MCF 10A (cell line): ENCODE measurements at regions of chr5 and their contacts with region 1.

Region 1: DNA sequence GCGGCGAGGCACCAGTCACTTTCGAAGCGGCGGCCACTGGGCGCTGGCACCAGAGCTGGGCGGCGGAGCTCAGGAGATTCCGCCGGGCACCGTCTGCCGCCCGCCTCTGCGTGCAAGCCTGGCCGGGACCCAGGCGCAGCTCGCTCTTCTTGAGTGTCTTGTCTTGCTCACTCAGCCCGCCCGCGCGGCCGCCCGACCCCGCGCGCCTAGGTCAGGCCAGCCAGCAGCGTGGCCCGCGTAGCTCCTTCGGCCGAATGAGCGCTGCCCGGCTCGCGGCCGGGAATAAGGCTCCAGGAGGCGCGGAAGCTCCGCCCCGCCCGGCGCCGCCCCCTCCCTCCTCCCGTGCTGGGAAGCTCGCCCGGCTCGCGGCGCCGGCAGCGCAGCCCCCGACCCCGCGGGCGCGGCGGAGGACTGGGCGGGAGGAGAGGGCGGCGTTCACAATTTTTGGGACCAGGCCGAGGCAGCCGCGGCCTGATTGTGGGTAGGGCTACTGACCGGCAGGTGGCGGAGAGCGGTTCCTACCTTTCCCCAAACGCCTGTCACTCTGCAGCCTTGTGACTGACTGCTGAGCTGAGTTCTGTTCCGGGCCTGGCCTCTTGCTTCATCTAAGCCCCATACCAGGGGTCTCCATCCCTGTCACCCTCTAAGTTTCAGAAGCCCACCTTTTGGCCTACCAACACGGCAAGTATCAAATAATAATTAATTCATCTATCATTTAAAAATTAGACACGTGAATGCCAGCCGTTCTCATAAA is at the start of gene HBEGF:
- DNase-seq: peak; percentile 94
- H3K4me3 Mint-ChIP-seq: peak within 1 kb of the TSS; percentile 78
- H3K27ac Mint-ChIP-seq: peak within 1 kb of the TSS; percentile 54
- H3K4me1 Mint-ChIP-seq: peaks cover 47% of the 10 kb centered on the region
- H3K27me3 Mint-ChIP-seq: no peaks in the 10 kb centered on the region
- CTCF ChIP-seq: peak; percentile 62
- total RNA-seq, gene HBEGF: 20.6 and 55.7 TPM in 2 replicates

Region 2: DNA sequence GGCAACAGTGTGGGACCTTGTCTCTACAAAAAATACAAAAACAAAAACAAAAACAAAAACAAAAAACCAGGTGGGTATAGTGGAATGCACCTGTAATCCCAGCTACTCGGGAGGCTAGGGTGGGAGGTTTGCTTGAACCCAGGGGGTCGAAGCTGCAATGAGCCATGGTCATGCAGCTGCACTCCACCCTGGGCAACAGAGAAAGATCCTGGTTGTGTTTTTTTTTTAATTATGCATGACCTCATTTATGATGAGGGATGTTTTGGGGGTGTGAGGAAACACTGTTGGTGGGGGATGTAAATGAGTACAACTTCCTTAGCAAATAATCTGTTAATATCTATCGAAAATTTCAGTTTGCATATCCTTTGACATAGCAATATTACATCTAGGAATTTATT is 814.8 kb before region 1 on chr5:
- CTCF ChIA-PET with region 1: no interaction called
- POLR2A ChIA-PET with region 1: no interaction called
- intact Hi-C with region 1: no loop called
- DNase-seq: no peak
- H3K4me3 Mint-ChIP-seq: no peak overlapping the region
- H3K27ac Mint-ChIP-seq: no peak overlapping the region
- H3K4me1 Mint-ChIP-seq: no peaks in the 10 kb centered on the region
- H3K27me3 Mint-ChIP-seq: no peaks in the 10 kb centered on the region
- CTCF ChIP-seq: no peak

Region 3: DNA sequence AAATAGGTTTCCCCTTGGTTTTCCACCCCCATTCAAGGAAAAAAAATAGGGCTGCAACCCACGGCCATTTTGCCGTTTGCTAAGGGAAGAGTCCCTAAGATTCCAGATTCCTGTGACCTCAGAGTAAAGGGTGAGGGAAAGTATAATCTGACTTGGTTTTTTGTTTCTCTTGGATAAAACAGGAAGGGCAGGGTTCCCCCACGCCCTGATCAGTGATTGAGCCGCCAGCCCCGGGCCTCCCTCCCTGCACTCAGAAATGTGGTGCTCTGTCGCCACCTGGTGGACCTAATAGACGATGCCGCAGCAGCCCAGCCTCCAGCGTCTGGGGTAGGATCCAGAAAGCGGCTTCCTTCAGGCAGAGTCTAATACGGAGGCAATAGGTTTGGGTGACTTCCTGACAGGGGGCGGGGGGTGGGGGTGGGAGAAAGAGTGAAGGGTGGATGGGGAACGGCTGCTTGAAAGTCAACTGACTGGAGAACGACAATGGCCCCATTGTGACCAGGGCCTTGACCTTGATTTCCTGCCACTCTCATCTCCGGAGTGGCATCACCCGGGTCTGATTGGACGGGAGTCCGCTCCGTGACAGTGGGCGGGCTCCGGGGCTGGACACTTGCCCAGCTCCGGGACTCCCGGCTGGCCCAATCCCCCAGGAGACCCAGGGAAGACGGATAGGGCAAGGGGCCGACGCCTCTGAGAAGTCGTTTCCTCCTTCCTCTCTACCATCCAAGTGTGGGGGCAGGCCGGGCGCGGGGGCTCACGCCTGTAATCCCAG is 189.3 kb before region 1 on chr5:
- CTCF ChIA-PET with region 1: interaction called, 3 read pairs
- POLR2A ChIA-PET with region 1: no interaction called
- intact Hi-C with region 1: loop called (anchors 5 kb)
- DNase-seq: peak; percentile 93
- H3K4me3 Mint-ChIP-seq: peak overlapping the region; percentile 62
- H3K27ac Mint-ChIP-seq: peak overlapping the region; percentile 9
- H3K4me1 Mint-ChIP-seq: peaks cover 9% of the 10 kb centered on the region
- H3K27me3 Mint-ChIP-seq: no peaks in the 10 kb centered on the region
- CTCF ChIP-seq: peak; percentile 97

Region 4: GRCh38 chr5:140244525-140245025 is 102.0 kb before region 1 on chr5:
- CTCF ChIA-PET with region 1: interaction called, 1,450 read pairs
- POLR2A ChIA-PET with region 1: interaction called, 135 read pairs
- intact Hi-C with region 1: loop called (anchors 1 kb)
- DNase-seq: peak; percentile 91
- H3K4me3 Mint-ChIP-seq: no peak overlapping the region
- H3K27ac Mint-ChIP-seq: no peak overlapping the region
- H3K4me1 Mint-ChIP-seq: peaks cover 36% of the 10 kb centered on the region
- H3K27me3 Mint-ChIP-seq: no peaks in the 10 kb centered on the region
- CTCF ChIP-seq: peak; percentile 94

Region 5: GRCh38 chr5:140295414-140295813 is 51.1 kb before region 1 on chr5:
- CTCF ChIA-PET with region 1: interaction called, 11 read pairs
- POLR2A ChIA-PET with region 1: interaction called, 26 read pairs
- intact Hi-C with region 1: no loop called
- DNase-seq: peak; percentile 94
- H3K4me3 Mint-ChIP-seq: no peak overlapping the region
- H3K27ac Mint-ChIP-seq: no peak overlapping the region
- H3K4me1 Mint-ChIP-seq: peaks cover 52% of the 10 kb centered on the region
- H3K27me3 Mint-ChIP-seq: no peaks in the 10 kb centered on the region
- CTCF ChIP-seq: no peak

Region 6: GRCh38 chr5:140321796-140322195 is 24.7 kb before region 1 on chr5:
- CTCF ChIA-PET with region 1: interaction called, 14 read pairs
- POLR2A ChIA-PET with region 1: interaction called, 6 read pairs
- intact Hi-C with region 1: no loop called
- DNase-seq: no peak
- H3K4me3 Mint-ChIP-seq: no peak overlapping the region
- H3K27ac Mint-ChIP-seq: no peak overlapping the region
- H3K4me1 Mint-ChIP-seq: peaks cover 14% of the 10 kb centered on the region
- H3K27me3 Mint-ChIP-seq: no peaks in the 10 kb centered on the region
- CTCF ChIP-seq: no peak

Region 7: DNA sequence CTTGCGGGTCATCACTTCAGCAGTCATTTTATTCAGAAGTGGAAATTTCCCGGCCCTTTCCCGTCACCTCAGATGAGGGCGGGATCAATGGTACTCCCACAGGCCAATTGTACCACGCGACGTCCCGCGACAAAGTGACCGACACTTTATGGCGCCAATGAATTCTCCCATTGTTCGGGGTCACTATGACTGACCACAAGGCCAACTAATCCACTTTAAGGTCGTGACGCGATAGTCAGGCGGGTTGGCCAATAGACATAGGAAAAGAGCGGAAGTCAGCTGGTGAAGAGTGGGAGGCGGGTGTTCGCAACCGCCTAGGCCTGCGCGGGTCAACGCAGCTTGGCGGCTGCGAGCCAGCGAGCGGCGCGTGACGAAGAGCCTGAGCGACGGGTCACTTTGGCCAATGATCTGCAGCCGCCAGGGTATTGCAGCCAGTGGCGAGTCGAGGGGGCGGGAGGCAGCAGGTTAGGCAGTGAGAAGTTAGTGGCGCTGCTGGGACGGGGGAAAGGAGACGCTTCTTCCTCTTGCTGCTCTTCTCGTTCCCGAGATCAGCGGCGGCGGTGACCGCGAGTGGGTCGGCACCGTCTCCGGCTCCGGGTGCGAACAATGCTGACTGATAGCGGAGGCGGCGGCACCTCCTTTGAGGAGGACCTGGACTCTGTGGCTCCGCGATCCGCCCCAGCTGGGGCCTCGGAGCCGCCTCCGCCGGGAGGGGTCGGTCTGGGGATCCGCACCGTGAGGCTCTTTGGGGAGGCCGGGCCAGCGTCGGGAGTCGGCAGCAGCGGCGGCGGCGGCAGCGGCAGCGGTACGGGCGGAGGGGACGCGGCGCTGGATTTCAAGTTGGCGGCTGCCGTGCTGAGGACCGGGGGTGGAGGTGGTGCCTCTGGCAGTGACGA is 55.1 kb after region 1 on chr5 and contains the start of gene ANKHD1:
- CTCF ChIA-PET with region 1: interaction called, 3 read pairs
- POLR2A ChIA-PET with region 1: interaction called, 27 read pairs
- intact Hi-C with region 1: no loop called
- DNase-seq: peak; percentile 100
- H3K4me3 Mint-ChIP-seq: no peak within 1 kb of the TSS
- H3K27ac Mint-ChIP-seq: no peak within 1 kb of the TSS
- H3K4me1 Mint-ChIP-seq: peaks cover 19% of the 10 kb centered on the region
- H3K27me3 Mint-ChIP-seq: no peaks in the 10 kb centered on the region
- CTCF ChIP-seq: no peak
- total RNA-seq, gene ANKHD1: 142 and 146 TPM in 2 replicates